Activated CD4-positive, alpha-beta T cell treated with anti-CD3 and anti-CD28 coated beads for 36 hours (primary cell): ENCODE measurements at regions of chr10 and their contacts with region 1.

Region 1: GRCh38 chr10:116385994-116386809 is 41.4 kb upstream of the PNLIPRP3 start:
- DNase-seq: no peak
- ATAC-seq: no peak
- H3K4me3 Mint-ChIP-seq: no peak overlapping the region
- H3K27ac Mint-ChIP-seq: no peak overlapping the region
- H3K4me1 Mint-ChIP-seq: no peaks in the 10 kb centered on the region
- H3K27me3 Mint-ChIP-seq: peaks cover 2% of the 10 kb centered on the region

Region 2: DNA sequence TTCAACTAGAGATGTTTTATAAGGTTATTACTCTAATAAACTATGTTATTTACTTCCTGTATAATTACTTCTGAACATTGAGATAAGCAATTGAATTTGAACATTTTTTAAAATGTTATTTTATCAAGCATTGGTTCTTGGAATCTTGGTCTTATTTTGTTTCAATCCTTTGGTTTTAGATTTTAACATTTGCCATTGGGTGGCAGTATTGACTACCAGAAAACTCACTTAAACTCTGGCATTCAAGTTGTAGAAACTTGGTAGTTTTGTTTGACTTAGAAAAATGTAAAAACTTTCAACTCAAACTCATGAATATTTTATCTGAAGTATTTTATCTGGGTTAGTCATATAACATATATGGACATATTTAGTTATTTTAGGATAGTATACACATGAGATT is 1244.9 kb before region 1 on chr10:
- CTCF ChIA-PET with region 1: interaction called, 4 read pairs
- POLR2A ChIA-PET with region 1: no interaction called
- intact Hi-C with region 1: loop called in 1 of 2 experiments (anchors 10 kb)
- DNase-seq: no peak
- ATAC-seq: no peak
- H3K4me3 Mint-ChIP-seq: no peak overlapping the region
- H3K27ac Mint-ChIP-seq: no peak overlapping the region
- H3K4me1 Mint-ChIP-seq: no peaks in the 10 kb centered on the region
- H3K27me3 Mint-ChIP-seq: peaks cover 15% of the 10 kb centered on the region

Region 3: GRCh38 chr10:115171392-115171960 is 1214.7 kb before region 1 on chr10:
- CTCF ChIA-PET with region 1: interaction called, 3 read pairs
- POLR2A ChIA-PET with region 1: no interaction called
- intact Hi-C with region 1: loop called (anchors 2 to 5 kb)
- DNase-seq: no peak
- ATAC-seq: no peak
- H3K4me3 Mint-ChIP-seq: no peak overlapping the region
- H3K27ac Mint-ChIP-seq: no peak overlapping the region
- H3K4me1 Mint-ChIP-seq: no peaks in the 10 kb centered on the region
- H3K27me3 Mint-ChIP-seq: no peaks in the 10 kb centered on the region

Region 4: DNA sequence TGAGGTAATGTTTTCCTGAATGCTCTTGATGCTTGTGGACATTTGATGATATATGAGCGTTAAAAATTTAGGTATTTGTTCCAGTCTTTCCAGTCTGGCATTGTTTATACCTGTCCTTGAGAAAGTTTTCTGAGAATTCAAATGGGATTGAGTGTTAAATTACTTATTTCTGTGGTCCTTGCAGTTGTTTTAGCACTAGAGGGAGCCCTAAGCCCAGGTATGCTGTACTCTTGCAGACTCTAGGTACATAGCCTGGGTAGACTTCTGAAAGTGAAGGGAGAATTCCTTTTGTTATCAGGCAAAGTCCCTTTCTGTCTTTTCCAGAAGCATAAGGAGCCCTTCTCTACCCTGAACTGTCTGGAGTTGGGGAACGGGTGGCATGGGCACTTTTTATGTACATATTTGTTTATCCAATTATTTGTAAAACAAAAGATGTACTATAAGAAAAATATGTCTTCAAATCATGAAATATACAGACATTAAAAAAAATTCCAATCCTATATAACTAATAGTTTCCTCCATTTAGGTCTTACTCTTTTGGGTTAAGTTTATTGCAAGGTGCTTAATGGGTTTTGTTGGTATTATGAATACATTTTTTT is 1030.9 kb before region 1 on chr10:
- CTCF ChIA-PET with region 1: interaction called, 3 read pairs
- POLR2A ChIA-PET with region 1: no interaction called
- intact Hi-C with region 1: loop called (anchors 1 kb)
- DNase-seq: peak; percentile 48
- ATAC-seq: peak; percentile 58
- H3K4me3 Mint-ChIP-seq: no peak overlapping the region
- H3K27ac Mint-ChIP-seq: no peak overlapping the region
- H3K4me1 Mint-ChIP-seq: no peaks in the 10 kb centered on the region
- H3K27me3 Mint-ChIP-seq: no peaks in the 10 kb centered on the region

Region 5: GRCh38 chr10:115432188-115432775 is 953.9 kb before region 1 on chr10:
- CTCF ChIA-PET with region 1: no interaction called
- POLR2A ChIA-PET with region 1: no interaction called
- intact Hi-C with region 1: loop called in 1 of 2 experiments (anchors 5 kb)
- DNase-seq: no peak
- ATAC-seq: no peak
- H3K4me3 Mint-ChIP-seq: no peak overlapping the region
- H3K27ac Mint-ChIP-seq: no peak overlapping the region
- H3K4me1 Mint-ChIP-seq: no peaks in the 10 kb centered on the region
- H3K27me3 Mint-ChIP-seq: no peaks in the 10 kb centered on the region

Region 6: GRCh38 chr10:115706026-115706781 is 680.0 kb before region 1 on chr10:
- CTCF ChIA-PET with region 1: interaction called, 10 read pairs
- POLR2A ChIA-PET with region 1: no interaction called
- intact Hi-C with region 1: loop called (anchors 1 kb)
- DNase-seq: no peak
- ATAC-seq: no peak
- H3K4me3 Mint-ChIP-seq: no peak overlapping the region
- H3K27ac Mint-ChIP-seq: no peak overlapping the region
- H3K4me1 Mint-ChIP-seq: no peaks in the 10 kb centered on the region
- H3K27me3 Mint-ChIP-seq: no peaks in the 10 kb centered on the region

Region 7: DNA sequence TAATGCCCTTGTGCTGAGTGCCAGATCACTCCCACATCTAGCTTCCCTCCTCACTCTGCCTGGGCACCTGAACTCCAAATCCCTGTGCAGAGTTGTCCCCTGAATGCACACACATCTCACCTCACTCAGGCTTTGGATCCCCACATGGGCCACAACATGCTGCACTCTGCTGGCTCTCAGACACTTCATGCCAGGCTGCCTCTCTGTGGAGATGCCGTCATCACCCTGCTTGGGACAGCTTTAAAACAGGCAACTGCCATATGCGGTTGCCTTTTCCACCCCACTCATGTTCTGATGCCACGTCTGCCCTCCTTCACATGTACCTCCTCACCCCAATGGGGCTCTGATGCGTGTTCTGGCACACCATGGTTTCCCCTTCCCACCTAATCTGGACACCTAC is 590.2 kb before region 1 on chr10:
- CTCF ChIA-PET with region 1: no interaction called
- POLR2A ChIA-PET with region 1: no interaction called
- intact Hi-C with region 1: loop called in 1 of 2 experiments (anchors 5 kb)
- DNase-seq: no peak
- ATAC-seq: no peak
- H3K4me3 Mint-ChIP-seq: no peak overlapping the region
- H3K27ac Mint-ChIP-seq: no peak overlapping the region
- H3K4me1 Mint-ChIP-seq: no peaks in the 10 kb centered on the region
- H3K27me3 Mint-ChIP-seq: no peaks in the 10 kb centered on the region

Region 8: GRCh38 chr10:116452338-116452720 is 66.1 kb after region 1 on chr10:
- CTCF ChIA-PET with region 1: no interaction called
- POLR2A ChIA-PET with region 1: no interaction called
- intact Hi-C with region 1: no loop called
- DNase-seq: no peak
- ATAC-seq: no peak
- H3K4me3 Mint-ChIP-seq: no peak overlapping the region
- H3K27ac Mint-ChIP-seq: no peak overlapping the region
- H3K4me1 Mint-ChIP-seq: no peaks in the 10 kb centered on the region
- H3K27me3 Mint-ChIP-seq: peaks cover 4% of the 10 kb centered on the region